ENCODE measurements at regions of chr1 and their contacts with region 1.

Region 1: DNA sequence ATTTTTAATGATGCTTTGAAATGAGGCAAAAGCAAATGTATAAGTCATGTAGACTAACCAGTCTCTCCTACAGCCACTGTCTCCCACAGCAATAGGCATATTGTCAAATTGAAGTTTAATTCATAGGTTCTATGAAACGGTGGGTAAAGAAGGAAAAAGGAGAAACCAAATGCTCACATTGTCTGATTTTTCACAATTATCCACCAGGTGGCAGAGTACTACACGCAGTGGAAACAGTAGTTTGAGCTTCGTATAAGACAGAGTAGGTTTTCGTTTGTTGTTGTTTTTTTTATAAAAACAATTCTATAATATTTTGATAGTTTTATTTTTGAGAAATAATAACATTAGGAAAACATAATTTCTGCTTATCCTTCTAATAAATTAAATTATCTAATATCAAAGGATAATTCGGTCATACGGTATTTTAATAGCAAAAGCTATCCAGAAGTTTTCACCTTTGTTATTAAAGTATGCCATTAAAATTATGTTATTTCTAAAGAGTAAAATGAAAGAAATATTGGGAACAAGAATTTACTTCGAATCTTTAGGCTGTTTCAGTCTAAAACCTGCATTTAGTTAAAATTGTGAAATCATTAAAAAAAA is 39.1 kb downstream of the TYW3 start:
- DNase-seq: peak in 1 of 2 donors; percentile 74
- H3K4me3 ChIP-seq: no peak overlapping the region
- H3K27ac ChIP-seq: no peak overlapping the region
- H3K4me1 ChIP-seq: no peaks in the 10 kb centered on the region
- H3K27me3 ChIP-seq: peaks cover 0 to 9% (median 0%) of the 10 kb centered on the region in 3 donors
- CTCF ChIP-seq: peak in 5 of 7 experiments; percentile 36 to 54 (median 46)
- EP300 ChIP-seq: no peak
- POLR2A ChIP-seq: no peak

Region 2: DNA sequence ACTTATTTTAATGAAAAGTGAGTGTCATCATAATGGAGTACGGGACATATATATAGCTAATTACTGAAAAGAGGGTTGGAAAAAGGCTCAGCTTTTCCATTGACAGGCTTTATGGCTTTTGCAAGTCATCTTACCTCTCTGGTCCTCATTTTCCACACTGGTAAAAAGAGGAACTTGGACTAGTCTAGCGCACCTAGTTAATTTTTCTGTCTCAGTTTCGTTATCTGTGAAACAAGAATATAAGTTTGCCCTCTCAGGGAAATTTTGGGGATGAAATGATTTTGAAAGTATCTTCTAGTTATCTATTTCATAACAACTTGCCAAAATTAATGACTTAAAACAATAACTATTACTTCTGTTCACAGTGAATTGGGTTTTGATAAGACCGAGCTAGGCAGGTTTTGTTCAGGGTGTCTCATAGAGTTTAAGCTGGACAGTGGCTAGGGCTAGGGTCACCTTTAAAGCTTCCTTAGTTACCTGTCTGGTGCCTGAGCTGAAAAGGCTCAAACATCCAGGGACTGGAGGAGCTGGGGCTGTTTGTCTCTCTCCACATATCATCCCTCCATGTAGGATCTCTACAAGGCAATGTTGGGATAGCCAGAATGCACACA is 52.6 kb after region 1 on chr1:
- intact Hi-C with region 1: no loop called
- DNase-seq: no peak
- H3K4me3 ChIP-seq: no peak overlapping the region
- H3K27ac ChIP-seq: no peak overlapping the region
- H3K4me1 ChIP-seq: no peaks in the 10 kb centered on the region
- H3K27me3 ChIP-seq: no peaks in the 10 kb centered on the region
- CTCF ChIP-seq: no peak
- EP300 ChIP-seq: no peak
- POLR2A ChIP-seq: no peak

Region 3: GRCh38 chr1:75203415-75204277 is 431.6 kb after region 1 on chr1:
- intact Hi-C with region 1: loop called (anchors 5 kb)
- DNase-seq: peak in 1 of 2 donors; percentile 62
- H3K4me3 ChIP-seq: no peak overlapping the region
- H3K27ac ChIP-seq: no peak overlapping the region
- H3K4me1 ChIP-seq: no peaks in the 10 kb centered on the region
- H3K27me3 ChIP-seq: peaks cover 0 to 4% (median 0%) of the 10 kb centered on the region in 3 donors
- CTCF ChIP-seq: peak in 5 of 7 experiments; percentile 26 to 68 (median 43)
- EP300 ChIP-seq: no peak
- POLR2A ChIP-seq: no peak